CD4-positive, alpha-beta memory T cell (primary cell): ENCODE measurements at regions of chr5 and their contacts with region 1.

Region 1: GRCh38 chr5:56686337-56687195 is 128.8 kb upstream of the MAP3K1 start:
- DNase-seq: peak in 4 of 5 donors; percentile 33 to 48 (median 41)
- H3K4me3 ChIP-seq: peak overlapping the region in 1 of 2 donors; percentile 15
- H3K4me3 Mint-ChIP-seq: peak overlapping the region in 7 of 8 donors; percentile 29 to 72 (median 52)
- H3K27ac ChIP-seq: peak overlapping the region; percentile 31
- H3K27ac Mint-ChIP-seq: peak overlapping the region; percentile 44 to 91 (median 84)
- H3K4me1 ChIP-seq: peaks cover 99% of the 10 kb centered on the region
- H3K4me1 Mint-ChIP-seq: peaks cover 60 to 100% (median 80%) of the 10 kb centered on the region in 4 donors
- H3K27me3 ChIP-seq: no peaks in the 10 kb centered on the region
- H3K27me3 Mint-ChIP-seq: no peaks in the 10 kb centered on the region

Region 2: DNA sequence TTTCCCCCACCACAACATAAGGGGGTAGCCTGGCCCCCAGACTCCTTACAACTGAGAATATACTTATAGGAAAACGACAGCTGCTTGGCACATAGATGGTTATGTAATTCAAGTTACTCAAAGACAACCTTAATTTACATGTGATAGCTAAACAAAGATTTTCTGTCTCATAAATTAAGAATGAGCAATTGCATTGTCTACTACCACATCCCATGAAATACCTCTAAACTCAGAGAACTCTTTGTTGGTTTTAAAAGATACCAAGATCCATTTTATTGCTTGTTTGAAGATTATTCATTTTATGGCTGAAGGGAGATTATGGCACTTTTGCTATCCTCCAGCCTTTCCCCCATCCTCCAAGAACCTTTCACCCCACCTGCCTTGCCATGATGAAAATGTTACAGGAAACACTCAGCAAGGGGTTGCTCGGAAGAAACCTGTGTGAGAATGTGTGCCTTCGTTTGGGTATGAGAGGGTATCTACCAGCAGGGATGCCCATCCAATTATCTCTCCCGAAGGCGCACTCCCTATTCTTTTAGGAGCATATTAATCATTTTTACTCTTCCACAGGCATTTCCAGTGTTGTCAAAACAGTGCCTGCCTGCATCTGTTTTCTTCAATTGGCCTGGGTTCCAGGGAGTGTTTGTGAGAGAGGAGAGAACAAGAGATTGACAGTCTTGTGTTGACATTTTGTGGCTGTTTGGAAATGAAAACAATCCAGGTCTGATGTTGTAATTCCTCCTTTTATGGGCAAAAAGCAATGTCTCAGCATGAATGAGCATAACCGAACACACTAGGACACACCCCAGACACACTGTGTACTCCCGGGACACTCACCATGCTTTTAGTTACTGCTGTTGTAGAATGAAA is 245.5 kb before region 1 on chr5:
- CTCF ChIA-PET with region 1: no interaction called
- POLR2A ChIA-PET with region 1: no interaction called
- intact Hi-C with region 1: no loop called
- DNase-seq: no peak
- H3K4me3 ChIP-seq: no peak overlapping the region
- H3K4me3 Mint-ChIP-seq: no peak overlapping the region
- H3K27ac ChIP-seq: no peak overlapping the region
- H3K27ac Mint-ChIP-seq: no peak overlapping the region
- H3K4me1 ChIP-seq: no peaks in the 10 kb centered on the region
- H3K4me1 Mint-ChIP-seq: peaks cover 0 to 2% (median under 1%) of the 10 kb centered on the region in 4 donors
- H3K27me3 ChIP-seq: no peaks in the 10 kb centered on the region
- H3K27me3 Mint-ChIP-seq: no peaks in the 10 kb centered on the region

Region 3: DNA sequence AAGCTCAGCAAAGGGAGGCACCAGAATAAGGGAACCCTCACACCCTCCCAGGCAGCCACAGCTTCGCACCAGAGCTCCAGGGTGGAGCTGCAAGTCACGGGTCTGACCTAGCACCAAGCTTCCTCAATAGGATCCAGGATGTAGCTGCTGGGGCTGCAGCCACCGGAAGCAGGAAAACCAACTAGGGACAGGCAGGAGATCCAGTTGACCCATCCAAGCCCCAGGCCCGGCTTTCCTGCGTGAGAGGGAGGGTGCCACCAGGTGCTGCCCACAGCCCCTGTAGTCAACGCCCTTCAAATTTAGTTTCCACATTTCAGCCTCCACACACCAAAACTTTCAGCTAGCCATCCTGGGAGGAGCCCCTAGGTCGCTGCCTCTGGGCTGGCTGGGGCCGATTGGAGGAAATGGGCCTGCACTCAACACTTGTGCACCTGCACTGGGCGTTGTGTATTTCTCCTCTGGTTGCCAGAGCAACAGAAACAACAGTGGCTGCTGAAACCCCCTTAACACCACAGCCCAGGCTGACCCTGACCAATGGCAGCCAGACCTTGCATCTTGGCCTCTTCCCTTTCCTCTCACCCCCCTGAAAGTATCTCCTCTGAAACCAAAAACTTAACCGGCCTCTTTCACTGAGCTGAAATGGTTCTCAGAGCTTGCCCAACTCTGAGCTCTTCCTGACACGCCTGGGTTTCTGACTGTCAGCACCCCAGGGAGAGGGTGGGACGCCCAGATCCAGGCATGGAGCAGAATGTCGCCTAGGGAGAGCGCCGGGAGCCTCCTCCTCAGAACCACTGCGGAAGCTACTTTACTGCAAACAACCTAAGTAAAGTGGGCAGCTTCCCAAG is 97.7 kb before region 1 on chr5:
- CTCF ChIA-PET with region 1: interaction called, 3 read pairs
- POLR2A ChIA-PET with region 1: interaction called, 40 read pairs
- intact Hi-C with region 1: loop called (anchors 5 kb)
- DNase-seq: peak; percentile 73 to 88 (median 82)
- H3K4me3 ChIP-seq: no peak overlapping the region
- H3K4me3 Mint-ChIP-seq: peak overlapping the region; percentile 49 to 81 (median 68)
- H3K27ac ChIP-seq: peak overlapping the region; percentile 72
- H3K27ac Mint-ChIP-seq: peak overlapping the region; percentile 91 to 98 (median 95)
- H3K4me1 ChIP-seq: peaks cover 52% of the 10 kb centered on the region
- H3K4me1 Mint-ChIP-seq: peaks cover 52 to 74% (median 61%) of the 10 kb centered on the region in 4 donors
- H3K27me3 ChIP-seq: no peaks in the 10 kb centered on the region
- H3K27me3 Mint-ChIP-seq: no peaks in the 10 kb centered on the region

Region 4: DNA sequence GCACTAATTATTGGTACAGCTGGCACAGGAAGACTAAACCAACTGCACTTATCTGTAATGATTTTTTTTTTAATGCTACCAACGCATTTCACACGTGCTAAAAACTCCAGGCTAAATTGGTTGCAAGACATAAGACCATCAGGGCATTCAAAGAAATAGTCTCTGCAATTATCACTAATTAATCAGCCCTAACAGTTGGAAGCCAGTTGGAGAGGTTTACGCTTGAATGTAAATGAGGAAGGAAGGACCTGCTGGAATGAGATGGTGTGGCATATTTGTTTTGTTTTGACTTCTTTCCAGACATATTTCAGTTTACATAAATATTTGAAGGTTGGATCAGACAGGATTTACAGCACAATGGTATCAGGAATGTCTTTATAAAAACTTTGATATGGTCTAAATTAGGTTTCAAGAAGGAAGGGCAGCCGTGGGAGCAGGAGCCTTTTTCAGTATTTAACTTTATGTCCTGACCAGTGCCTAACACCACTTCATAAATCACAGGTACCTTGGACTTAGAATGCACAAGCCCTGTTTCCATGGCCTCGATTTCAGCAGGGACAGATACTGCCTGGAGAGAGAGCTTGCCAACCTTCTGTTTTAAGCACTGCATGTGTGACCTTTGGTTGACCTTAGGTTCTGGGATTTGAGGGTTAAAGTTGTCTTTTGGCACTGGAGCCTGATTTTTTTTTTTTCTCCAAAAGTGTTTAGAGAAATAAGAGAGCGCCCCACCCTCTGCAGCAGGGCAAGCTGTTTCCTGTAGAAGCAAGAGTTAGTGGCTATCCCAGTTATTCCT is 71.0 kb before region 1 on chr5:
- CTCF ChIA-PET with region 1: no interaction called
- POLR2A ChIA-PET with region 1: interaction called, 11 read pairs
- intact Hi-C with region 1: no loop called
- DNase-seq: no peak
- H3K4me3 ChIP-seq: no peak overlapping the region
- H3K4me3 Mint-ChIP-seq: peak overlapping the region in 7 of 8 donors; percentile 33 to 89 (median 54)
- H3K27ac ChIP-seq: no peak overlapping the region
- H3K27ac Mint-ChIP-seq: peak overlapping the region; percentile 69 to 93 (median 81)
- H3K4me1 ChIP-seq: peaks cover 68% of the 10 kb centered on the region
- H3K4me1 Mint-ChIP-seq: peaks cover 56 to 69% (median 63%) of the 10 kb centered on the region in 4 donors
- H3K27me3 ChIP-seq: no peaks in the 10 kb centered on the region
- H3K27me3 Mint-ChIP-seq: no peaks in the 10 kb centered on the region

Region 5: DNA sequence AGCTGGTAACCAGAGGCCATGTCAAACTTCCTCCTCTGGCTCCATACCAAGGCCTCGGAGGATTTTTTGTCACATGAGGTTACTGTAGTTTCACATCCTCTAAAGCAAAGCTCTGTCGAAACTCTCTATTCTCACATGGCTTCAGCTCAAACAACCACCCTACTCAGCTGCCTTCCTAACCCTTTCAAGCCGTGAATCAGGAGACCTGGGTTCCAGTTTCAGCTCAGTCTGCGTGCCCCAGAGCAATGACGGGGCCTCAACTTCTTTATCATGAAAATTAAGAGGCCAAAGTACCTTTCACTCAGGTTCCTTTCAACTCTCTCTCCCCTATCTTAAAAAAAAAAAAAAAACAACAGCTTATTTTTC is 16.5 kb before region 1 on chr5:
- CTCF ChIA-PET with region 1: interaction called, 10 read pairs
- POLR2A ChIA-PET with region 1: interaction called, 24 read pairs
- intact Hi-C with region 1: no loop called
- DNase-seq: peak in 4 of 5 donors; percentile 26 to 67 (median 48)
- H3K4me3 ChIP-seq: no peak overlapping the region
- H3K4me3 Mint-ChIP-seq: peak overlapping the region in 7 of 8 donors; percentile 54 to 89 (median 76)
- H3K27ac ChIP-seq: peak overlapping the region; percentile 48
- H3K27ac Mint-ChIP-seq: peak overlapping the region; percentile 89 to 97 (median 93)
- H3K4me1 ChIP-seq: peaks cover 54% of the 10 kb centered on the region
- H3K4me1 Mint-ChIP-seq: peaks cover 23 to 52% (median 44%) of the 10 kb centered on the region in 4 donors
- H3K27me3 ChIP-seq: no peaks in the 10 kb centered on the region
- H3K27me3 Mint-ChIP-seq: no peaks in the 10 kb centered on the region

Region 6: DNA sequence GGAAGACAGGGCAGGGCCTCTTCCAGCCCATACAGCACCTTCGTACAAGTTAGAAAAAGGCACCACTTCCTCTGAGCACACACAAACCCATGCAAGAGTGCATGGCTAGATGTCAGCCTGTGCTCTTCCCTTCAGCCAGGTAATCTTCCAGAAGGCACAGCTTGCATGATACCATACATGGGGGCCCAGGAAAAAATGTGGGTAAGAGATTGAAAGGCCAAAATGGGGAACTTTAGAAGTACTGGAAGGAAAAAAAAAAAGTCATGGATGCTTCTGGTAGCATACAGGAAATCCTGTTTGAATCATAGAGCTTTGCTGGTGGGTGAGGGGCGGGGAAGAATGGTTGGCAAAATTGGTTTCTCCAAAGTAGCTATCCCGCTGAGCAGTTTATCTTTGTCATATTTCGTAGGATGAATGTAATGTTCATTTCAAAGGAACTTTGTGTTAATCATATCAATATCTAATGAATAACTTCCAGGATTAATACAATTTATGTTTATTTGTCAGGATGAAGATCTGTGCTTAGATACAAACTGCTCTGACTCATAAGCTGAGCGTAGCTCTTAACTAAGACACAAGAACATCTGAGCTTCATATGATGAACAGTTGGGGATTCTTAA is 50.5 kb after region 1 on chr5:
- CTCF ChIA-PET with region 1: interaction called, 5 read pairs
- POLR2A ChIA-PET with region 1: interaction called, 28 read pairs
- intact Hi-C with region 1: no loop called
- DNase-seq: no peak
- H3K4me3 ChIP-seq: no peak overlapping the region
- H3K4me3 Mint-ChIP-seq: peak overlapping the region in 7 of 8 donors; percentile 49 to 85 (median 74)
- H3K27ac ChIP-seq: peak overlapping the region; percentile 45
- H3K27ac Mint-ChIP-seq: peak overlapping the region; percentile 73 to 97 (median 94)
- H3K4me1 ChIP-seq: peaks cover 55% of the 10 kb centered on the region
- H3K4me1 Mint-ChIP-seq: peaks cover 39 to 68% (median 56%) of the 10 kb centered on the region in 4 donors
- H3K27me3 ChIP-seq: no peaks in the 10 kb centered on the region
- H3K27me3 Mint-ChIP-seq: no peaks in the 10 kb centered on the region